PC-3 (cell line): ENCODE measurements at regions of chr7 and their contacts with region 1.

Region 1: GRCh38 chr7:109844362-109844761 is 1246.6 kb upstream of the LRRN3 start:
- DNase-seq: peak; percentile 42
- ATAC-seq: peak; percentile 55; the same call in 1 of the 2 replicates
- H3K4me3 ChIP-seq: no peak overlapping the region
- H3K27ac ChIP-seq: no peak overlapping the region
- H3K4me1 ChIP-seq: no peaks in the 10 kb centered on the region
- H3K27me3 ChIP-seq: no peaks in the 10 kb centered on the region
- CTCF ChIP-seq: peak; percentile 74

Region 2: DNA sequence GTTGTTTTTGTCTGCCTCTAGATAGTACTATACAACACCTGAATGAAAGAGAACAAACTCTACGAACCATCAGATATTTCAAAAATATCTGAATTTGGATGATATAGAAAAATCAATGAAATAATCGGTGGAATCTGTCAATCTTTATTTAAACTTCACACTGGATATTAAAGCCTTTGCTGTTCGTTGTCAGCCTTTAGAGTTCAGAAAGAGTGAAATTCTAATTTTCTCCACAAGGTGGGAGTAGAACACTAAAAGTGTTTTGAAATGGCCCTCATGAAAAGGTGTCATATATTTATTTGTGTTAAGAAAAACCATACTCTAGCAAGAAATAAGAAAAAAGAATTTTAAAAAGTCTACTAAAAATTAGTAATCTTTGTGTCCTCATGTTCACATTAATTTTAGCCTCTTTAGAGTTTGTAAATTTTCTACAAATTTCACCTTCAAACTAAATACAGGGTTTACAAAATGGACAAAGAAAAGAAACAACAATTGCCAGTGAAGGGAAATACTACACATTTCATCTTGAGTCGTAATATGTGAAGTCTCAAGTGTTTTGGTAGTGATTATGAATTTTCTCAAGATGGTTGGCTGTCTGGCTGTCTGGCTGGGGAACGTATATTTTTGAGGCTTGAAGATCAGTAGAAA is 1231.1 kb before region 1 on chr7:
- CTCF ChIA-PET with region 1: no interaction called
- POLR2A ChIA-PET with region 1: no interaction called
- intact Hi-C with region 1: loop called (anchors 5 kb)
- DNase-seq: peak; percentile 78
- ATAC-seq: peak; percentile 64
- H3K4me3 ChIP-seq: no peak overlapping the region
- H3K27ac ChIP-seq: no peak overlapping the region
- H3K4me1 ChIP-seq: peaks cover 15% of the 10 kb centered on the region
- H3K27me3 ChIP-seq: no peaks in the 10 kb centered on the region
- CTCF ChIP-seq: peak; percentile 80

Region 3: DNA sequence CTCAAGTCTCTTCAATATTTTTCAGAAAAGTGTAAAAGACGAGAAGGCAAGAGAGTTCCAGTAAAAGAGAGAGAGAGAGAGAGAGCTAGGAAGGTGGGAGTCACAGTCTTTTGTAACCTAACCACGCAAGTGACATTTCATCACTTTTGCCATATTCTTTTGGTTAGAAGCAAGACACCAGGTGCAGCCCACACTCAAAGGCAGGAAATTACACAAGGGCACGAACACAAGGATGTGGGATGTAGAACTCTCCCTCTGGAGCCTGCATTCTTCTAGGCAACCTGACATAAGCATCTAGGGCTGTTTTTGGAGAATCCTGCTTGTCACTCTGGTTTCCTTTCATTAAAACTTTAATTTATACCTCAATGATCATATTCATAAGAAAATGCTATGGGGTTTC is 61.6 kb before region 1 on chr7:
- CTCF ChIA-PET with region 1: no interaction called
- POLR2A ChIA-PET with region 1: no interaction called
- intact Hi-C with region 1: no loop called
- DNase-seq: no peak
- ATAC-seq: no peak
- H3K4me3 ChIP-seq: no peak overlapping the region
- H3K27ac ChIP-seq: no peak overlapping the region
- H3K4me1 ChIP-seq: no peaks in the 10 kb centered on the region
- H3K27me3 ChIP-seq: no peaks in the 10 kb centered on the region
- CTCF ChIP-seq: no peak

Region 4: GRCh38 chr7:109915670-109916069 is 71.3 kb after region 1 on chr7:
- CTCF ChIA-PET with region 1: no interaction called
- POLR2A ChIA-PET with region 1: no interaction called
- intact Hi-C with region 1: no loop called
- DNase-seq: no peak
- ATAC-seq: no peak
- H3K4me3 ChIP-seq: no peak overlapping the region
- H3K27ac ChIP-seq: no peak overlapping the region
- H3K4me1 ChIP-seq: no peaks in the 10 kb centered on the region
- H3K27me3 ChIP-seq: no peaks in the 10 kb centered on the region
- CTCF ChIP-seq: no peak

Region 5: GRCh38 chr7:110090110-110090769 is 245.9 kb after region 1 on chr7:
- CTCF ChIA-PET with region 1: no interaction called
- POLR2A ChIA-PET with region 1: no interaction called
- intact Hi-C with region 1: loop called (anchors 2 kb)
- DNase-seq: peak; percentile 64
- ATAC-seq: peak; percentile 76
- H3K4me3 ChIP-seq: no peak overlapping the region
- H3K27ac ChIP-seq: no peak overlapping the region
- H3K4me1 ChIP-seq: no peaks in the 10 kb centered on the region
- H3K27me3 ChIP-seq: no peaks in the 10 kb centered on the region
- CTCF ChIP-seq: peak; percentile 60

Region 6: DNA sequence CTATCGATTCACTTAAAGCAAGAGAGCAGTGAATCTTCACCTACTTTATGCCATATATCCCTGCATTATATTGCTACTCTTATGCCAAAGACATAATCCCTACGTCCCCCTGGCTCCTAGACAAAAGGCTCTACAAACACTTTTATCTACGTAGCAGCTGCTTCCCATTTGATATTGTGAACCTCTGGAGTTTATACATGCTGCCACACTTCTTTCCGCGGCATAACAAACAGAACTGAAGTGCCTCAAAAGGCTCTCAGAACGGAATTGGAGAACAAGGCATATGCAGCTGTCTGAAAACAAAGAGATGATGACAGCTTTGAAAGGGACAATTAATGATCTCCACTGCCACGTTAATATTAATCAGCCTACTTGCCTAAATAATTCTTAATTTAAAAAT is 260.9 kb after region 1 on chr7:
- CTCF ChIA-PET with region 1: no interaction called
- POLR2A ChIA-PET with region 1: no interaction called
- intact Hi-C with region 1: no loop called
- DNase-seq: no peak
- ATAC-seq: no peak
- H3K4me3 ChIP-seq: no peak overlapping the region
- H3K27ac ChIP-seq: no peak overlapping the region
- H3K4me1 ChIP-seq: no peaks in the 10 kb centered on the region
- H3K27me3 ChIP-seq: no peaks in the 10 kb centered on the region
- CTCF ChIP-seq: no peak

Region 7: GRCh38 chr7:110204527-110204926 is 360.2 kb after region 1 on chr7:
- CTCF ChIA-PET with region 1: no interaction called
- POLR2A ChIA-PET with region 1: no interaction called
- intact Hi-C with region 1: loop called (anchors 1 kb)
- DNase-seq: peak; percentile 39
- ATAC-seq: peak; percentile 78
- H3K4me3 ChIP-seq: no peak overlapping the region
- H3K27ac ChIP-seq: no peak overlapping the region
- H3K4me1 ChIP-seq: no peaks in the 10 kb centered on the region
- H3K27me3 ChIP-seq: no peaks in the 10 kb centered on the region
- CTCF ChIP-seq: peak; percentile 47; the same call in 1 of the 2 replicates

Region 8: DNA sequence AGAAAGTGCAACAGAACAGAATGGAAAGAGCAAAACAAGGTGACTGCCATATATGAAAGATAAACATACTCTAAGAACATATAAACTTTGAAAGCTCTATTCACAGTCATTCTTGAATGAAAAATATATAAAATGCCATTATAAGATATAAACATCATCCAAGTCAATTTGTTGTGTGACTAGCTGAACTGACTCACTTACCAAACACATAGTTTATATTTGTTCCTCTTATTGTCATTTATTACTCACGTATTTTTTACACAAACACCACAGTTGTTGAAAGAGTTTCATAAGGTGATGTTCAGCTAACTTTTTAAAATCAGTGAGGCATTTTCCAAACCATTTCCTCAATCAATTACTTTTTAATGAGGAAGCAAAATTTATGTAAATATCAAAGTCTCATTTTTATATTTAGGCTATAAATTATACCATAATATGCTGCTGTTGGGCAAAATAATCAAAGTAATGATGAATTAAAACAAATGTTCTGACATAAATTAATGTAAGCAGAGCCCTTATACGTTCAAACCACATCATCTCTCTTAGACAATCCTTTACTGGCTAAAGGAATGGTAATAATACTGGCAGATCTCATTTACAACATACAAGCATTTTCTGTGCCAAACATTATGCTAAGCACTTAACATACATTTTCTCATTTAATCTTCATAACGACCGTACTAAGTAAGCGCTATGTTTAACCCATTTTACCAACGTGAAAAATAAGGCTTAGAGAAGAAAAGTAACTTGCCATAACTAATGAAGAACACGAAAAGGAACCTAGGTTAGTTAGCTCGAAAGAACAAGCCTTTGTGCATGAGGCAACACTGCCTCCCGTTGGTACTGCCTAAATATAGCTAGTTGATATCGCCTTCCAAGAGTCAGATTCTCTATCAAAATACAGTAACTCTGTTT is 1253.9 kb after region 1 on chr7:
- CTCF ChIA-PET with region 1: no interaction called
- POLR2A ChIA-PET with region 1: no interaction called
- intact Hi-C with region 1: loop called (anchors 2 kb)
- DNase-seq: peak; percentile 73
- ATAC-seq: peak; percentile 86
- H3K4me3 ChIP-seq: peak overlapping the region; percentile 41; the same call in 1 of the 2 replicates
- H3K27ac ChIP-seq: peak overlapping the region; percentile 95
- H3K4me1 ChIP-seq: peaks cover 30% of the 10 kb centered on the region
- H3K27me3 ChIP-seq: no peaks in the 10 kb centered on the region
- CTCF ChIP-seq: peak; percentile 86

Region 9: GRCh38 chr7:111735661-111736551 is 1891.5 kb after region 1 on chr7:
- CTCF ChIA-PET with region 1: no interaction called
- POLR2A ChIA-PET with region 1: no interaction called
- intact Hi-C with region 1: loop called (anchors 5 kb)
- DNase-seq: peak; percentile 85
- ATAC-seq: peak; percentile 71
- H3K4me3 ChIP-seq: no peak overlapping the region
- H3K27ac ChIP-seq: peak overlapping the region; percentile 10; the same call in 1 of the 2 replicates
- H3K4me1 ChIP-seq: peaks cover 13% of the 10 kb centered on the region
- H3K27me3 ChIP-seq: no peaks in the 10 kb centered on the region
- CTCF ChIP-seq: peak; percentile 85